Dorsolateral prefrontal cortex (tissue), 120 donors: ENCODE measurements at regions of chr4 and their contacts with region 1.

Region 1: DNA sequence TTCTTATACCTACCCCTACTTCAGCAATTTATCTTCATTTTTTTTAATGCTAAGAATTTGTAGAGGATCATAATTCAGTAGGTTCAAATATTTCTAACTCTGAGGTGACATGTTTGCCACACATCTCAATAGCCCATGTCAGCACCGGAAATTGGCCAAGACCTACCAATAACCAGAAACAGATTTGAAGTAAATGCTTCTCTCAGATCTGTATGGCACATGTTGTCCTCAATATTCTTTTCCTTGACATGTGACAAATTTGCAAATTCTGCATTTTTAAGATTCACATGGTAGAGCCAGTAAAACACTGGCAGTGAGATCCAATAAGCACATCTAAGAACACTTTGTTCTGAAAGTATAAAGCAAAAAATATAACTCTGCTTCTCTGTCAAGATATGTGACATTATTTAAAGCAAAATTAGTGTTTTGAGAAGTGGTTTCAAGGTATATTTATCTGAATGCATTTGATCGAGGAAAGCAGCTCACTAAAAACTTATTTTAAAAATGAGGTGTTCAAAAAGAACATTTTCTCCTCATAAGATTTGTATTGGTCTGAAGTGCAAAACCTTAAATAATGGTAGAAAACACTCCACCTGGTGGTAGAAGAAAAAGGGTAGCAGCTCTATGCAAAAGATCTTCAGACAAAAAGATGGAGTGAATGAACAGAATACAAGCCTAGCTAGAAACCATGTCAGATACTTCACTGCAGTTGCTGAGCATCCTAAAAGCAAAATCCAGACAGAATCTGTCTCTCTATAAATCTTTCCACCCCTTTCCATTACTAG is 513.8 kb upstream of the FAM241A start:
- DNase-seq: no peak
- H3K4me3 ChIP-seq: no peak overlapping the region
- H3K27ac ChIP-seq: no peak overlapping the region
- H3K27me3 ChIP-seq: peaks cover 0 to 66% (median 18%) of the 10 kb centered on the region in 45 donors
- CTCF ChIP-seq: peak in 53 of 56 donors; percentile 24 to 62 (median 44)

Region 2: GRCh38 chr4:111864066-111864465 is 232.7 kb after region 1 on chr4:
- intact Hi-C with region 1: no loop called
- DNase-seq: no peak
- H3K4me3 ChIP-seq: no peak overlapping the region
- H3K27ac ChIP-seq: no peak overlapping the region
- H3K27me3 ChIP-seq: peaks cover 0 to 17% (median 0%) of the 10 kb centered on the region in 45 donors
- CTCF ChIP-seq: no peak

Region 3: DNA sequence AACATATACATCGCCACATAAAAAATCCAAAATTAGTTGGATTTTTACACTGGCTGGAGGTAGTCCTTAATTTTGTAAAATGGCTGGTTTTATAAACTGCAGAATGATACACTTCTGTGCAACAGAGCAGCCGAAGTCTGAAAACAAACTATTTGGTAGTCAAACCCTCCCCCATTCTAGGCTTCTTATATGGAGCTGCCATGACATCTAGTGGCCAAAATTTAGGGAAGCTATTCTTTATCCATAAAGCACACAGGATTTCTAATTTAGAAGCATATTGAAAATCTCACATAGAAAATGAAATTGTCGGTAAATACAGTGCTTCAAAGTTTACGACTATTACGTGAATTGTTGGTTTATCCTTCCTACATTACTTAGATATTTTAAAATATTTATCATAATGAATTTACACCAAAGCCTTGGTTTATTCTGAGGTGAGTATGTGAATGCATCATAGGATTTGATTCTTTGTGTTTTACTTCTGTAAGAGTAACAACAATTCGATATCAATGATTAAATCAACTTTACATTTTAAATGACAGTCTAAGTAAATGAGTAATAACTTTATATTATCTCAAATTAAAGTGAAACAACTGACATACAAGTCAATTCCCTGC is 400.4 kb after region 1 on chr4:
- intact Hi-C with region 1: loop called in 1 of 2 experiments (anchors 10 kb)
- DNase-seq: no peak
- H3K4me3 ChIP-seq: no peak overlapping the region
- H3K27ac ChIP-seq: no peak overlapping the region
- H3K27me3 ChIP-seq: peaks cover 0 to 59% (median 15%) of the 10 kb centered on the region in 45 donors
- CTCF ChIP-seq: peak; percentile 46 to 85 (median 73)